GM12878 (cell line): ENCODE measurements at regions of chr6 and their contacts with region 1.

Region 1: GRCh38 chr6:15327271-15327670 is 81.4 kb downstream of the JARID2 start:
- DNase-seq: no peak
- ATAC-seq: peak; percentile 66
- H3K4me3 ChIP-seq: no peak overlapping the region; the same call in 1 of the 2 replicates
- H3K27ac ChIP-seq: peak overlapping the region; percentile 72
- H3K4me1 ChIP-seq: peaks cover 69% of the 10 kb centered on the region
- H3K27me3 ChIP-seq: no peaks in the 10 kb centered on the region
- CTCF ChIP-seq: peak; percentile 57 to 62 (median 60)
- EP300 ChIP-seq: no peak
- POLR2A ChIP-seq: no peak
- RAD21 ChIP-seq: peak; percentile 64

Region 2: GRCh38 chr6:15184441-15184861 is 142.8 kb before region 1 on chr6:
- CTCF ChIA-PET with region 1: no interaction called
- POLR2A ChIA-PET with region 1: no interaction called
- RAD21 ChIA-PET with region 1: no interaction called
- SMC1A ChIA-PET with region 1: no interaction called
- in situ Hi-C with region 1: no loop called
- intact Hi-C with region 1: no loop called
- DNase-seq: peak; percentile 15
- ATAC-seq: peak; percentile 96
- H3K4me3 ChIP-seq: no peak overlapping the region
- H3K27ac ChIP-seq: no peak overlapping the region
- H3K4me1 ChIP-seq: peaks cover 10% of the 10 kb centered on the region
- H3K27me3 ChIP-seq: no peaks in the 10 kb centered on the region
- CTCF ChIP-seq: no peak
- EP300 ChIP-seq: no peak
- POLR2A ChIP-seq: no peak
- RAD21 ChIP-seq: no peak

Region 3: DNA sequence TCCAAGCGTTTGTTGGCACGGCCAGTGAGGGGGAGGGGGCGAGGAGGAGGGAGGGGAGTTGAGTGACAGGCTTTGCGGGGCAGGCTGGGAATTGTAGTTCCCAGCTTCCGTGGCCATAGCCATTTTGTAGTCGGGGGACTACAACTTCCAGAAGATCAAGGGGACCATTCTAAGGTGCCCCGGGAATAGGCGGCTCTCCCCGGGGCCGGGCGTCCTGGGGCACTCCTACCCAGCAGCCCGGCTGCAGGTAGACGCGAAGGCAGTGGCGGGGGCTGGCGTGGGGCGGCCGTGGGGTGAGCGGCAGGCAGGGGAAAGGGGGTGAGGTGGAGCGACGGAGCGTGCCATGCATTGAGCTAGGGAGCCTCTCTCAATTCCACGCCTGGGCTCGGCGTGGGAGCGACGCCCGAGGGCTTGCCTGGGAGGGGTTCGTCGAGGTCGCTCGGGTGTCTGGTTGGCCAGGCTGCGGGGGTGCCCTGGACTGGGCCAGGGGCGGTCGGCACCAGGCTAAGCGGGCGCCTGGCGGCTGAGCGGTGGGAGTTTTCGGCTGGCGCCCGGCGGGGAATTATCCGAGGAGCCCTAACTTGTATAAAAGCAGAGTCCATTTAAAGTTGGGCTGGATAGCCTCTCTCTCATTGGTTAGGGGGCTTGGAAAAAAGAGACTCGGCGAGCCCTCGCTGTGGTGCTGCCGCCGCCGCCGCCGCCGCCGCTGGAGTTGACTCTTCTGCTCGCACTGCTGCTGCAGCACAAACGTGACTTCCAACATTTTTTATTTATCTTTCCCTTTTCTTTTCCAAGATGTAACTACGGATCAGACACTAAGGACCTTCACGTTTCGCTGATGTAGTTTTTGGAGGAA is 81.7 kb before region 1 on chr6 and contains the start of gene JARID2:
- CTCF ChIA-PET with region 1: interaction called, 9 read pairs
- POLR2A ChIA-PET with region 1: interaction called, 5 read pairs
- RAD21 ChIA-PET with region 1: interaction called, 11 read pairs
- SMC1A ChIA-PET with region 1: interaction called, 90 read pairs
- in situ Hi-C with region 1: no loop called
- intact Hi-C with region 1: no loop called
- DNase-seq: peak; percentile 91
- ATAC-seq: peak; percentile 72
- H3K4me3 ChIP-seq: peak within 1 kb of the TSS; percentile 97
- H3K27ac ChIP-seq: peak within 1 kb of the TSS; percentile 97
- H3K4me1 ChIP-seq: peaks cover under 1% of the 10 kb centered on the region; the same call in 1 of the 2 replicates
- H3K27me3 ChIP-seq: no peaks in the 10 kb centered on the region
- CTCF ChIP-seq: no peak
- EP300 ChIP-seq: 0 out of 4 replicates have a peak, but pooled peaks of 1 of the 2 experiments have one; percentile 14
- POLR2A ChIP-seq: peak; percentile 57; the same call in 1 of the 2 replicates
- RAD21 ChIP-seq: no peak
- polyA plus RNA-seq, gene JARID2: 4.2 to 5.2 TPM

Region 4: DNA sequence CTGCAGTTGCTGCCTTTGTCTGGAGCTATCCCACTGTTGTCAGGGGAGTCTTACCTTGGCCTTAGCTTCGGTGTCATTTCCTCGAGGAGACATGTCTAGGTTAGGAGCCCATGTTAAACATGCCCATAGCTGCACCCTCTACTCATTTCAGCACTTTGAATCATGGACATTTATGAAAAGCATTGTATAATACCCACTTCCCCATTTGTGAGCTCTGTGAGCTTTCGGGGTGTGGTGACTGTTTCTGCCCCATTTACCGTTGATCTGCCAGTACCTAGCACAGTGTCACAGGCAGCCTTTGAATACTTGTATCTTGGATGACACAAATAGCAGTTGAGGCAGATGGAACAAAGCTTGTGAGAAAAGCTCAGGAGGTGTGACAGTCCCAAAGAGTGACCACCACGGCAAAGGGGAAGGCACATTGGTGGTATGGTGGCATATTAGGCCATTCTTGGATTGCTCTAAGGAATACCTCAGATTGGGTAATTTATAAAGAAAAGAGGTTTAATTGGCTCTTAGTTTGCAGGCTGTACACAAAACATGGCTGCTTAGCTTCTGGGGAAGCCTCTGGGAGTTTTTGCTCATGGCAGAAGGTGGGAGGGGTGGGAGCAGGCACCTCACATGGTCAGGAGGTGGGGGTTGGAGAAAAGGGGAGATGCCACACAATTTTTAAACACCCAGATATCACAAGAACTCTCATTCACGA is 39.4 kb before region 1 on chr6:
- CTCF ChIA-PET with region 1: interaction called, 3 read pairs
- POLR2A ChIA-PET with region 1: interaction called, 3 read pairs
- RAD21 ChIA-PET with region 1: interaction called, 9 read pairs
- SMC1A ChIA-PET with region 1: interaction called, 10 read pairs
- in situ Hi-C with region 1: no loop called
- intact Hi-C with region 1: no loop called
- DNase-seq: peak; percentile 78
- ATAC-seq: peak; percentile 99
- H3K4me3 ChIP-seq: peak overlapping the region; percentile 11; the same call in 1 of the 2 replicates
- H3K27ac ChIP-seq: peak overlapping the region; percentile 79
- H3K4me1 ChIP-seq: peaks cover 24% of the 10 kb centered on the region
- H3K27me3 ChIP-seq: no peaks in the 10 kb centered on the region
- CTCF ChIP-seq: no peak
- EP300 ChIP-seq: peak in 1 of 2 experiments; percentile 78; a peak in 2 of 4 replicates
- POLR2A ChIP-seq: no peak
- RAD21 ChIP-seq: no peak

Region 5: GRCh38 chr6:15340775-15341174 is 13.5 kb after region 1 on chr6:
- CTCF ChIA-PET with region 1: interaction called, 7 read pairs
- POLR2A ChIA-PET with region 1: interaction called, 8 read pairs
- RAD21 ChIA-PET with region 1: interaction called, 8 read pairs
- SMC1A ChIA-PET with region 1: interaction called, 60 read pairs
- in situ Hi-C with region 1: no loop called
- intact Hi-C with region 1: no loop called
- DNase-seq: no peak
- ATAC-seq: peak; percentile 72
- H3K4me3 ChIP-seq: peak overlapping the region; percentile 6; the same call in 1 of the 2 replicates
- H3K27ac ChIP-seq: peak overlapping the region; percentile 80
- H3K4me1 ChIP-seq: peaks cover 50% of the 10 kb centered on the region
- H3K27me3 ChIP-seq: no peaks in the 10 kb centered on the region
- CTCF ChIP-seq: no peak
- EP300 ChIP-seq: no peak; a peak in 1 of 4 replicates
- POLR2A ChIP-seq: no peak
- RAD21 ChIP-seq: no peak

Region 6: GRCh38 chr6:15358579-15359327 is 31.5 kb after region 1 on chr6:
- CTCF ChIA-PET with region 1: interaction called, 21 read pairs
- POLR2A ChIA-PET with region 1: interaction called, 9 read pairs
- RAD21 ChIA-PET with region 1: interaction called, 24 read pairs
- SMC1A ChIA-PET with region 1: interaction called, 56 read pairs
- in situ Hi-C with region 1: no loop called
- intact Hi-C with region 1: loop called (anchors 2 kb)
- DNase-seq: peak; percentile 75
- ATAC-seq: peak; percentile 80
- H3K4me3 ChIP-seq: peak overlapping the region; percentile 27
- H3K27ac ChIP-seq: peak overlapping the region; percentile 81
- H3K4me1 ChIP-seq: peaks cover 75% of the 10 kb centered on the region
- H3K27me3 ChIP-seq: no peaks in the 10 kb centered on the region
- CTCF ChIP-seq: no peak
- EP300 ChIP-seq: no peak; a peak in 1 of 4 replicates
- POLR2A ChIP-seq: no peak
- RAD21 ChIP-seq: no peak

Region 7: GRCh38 chr6:15441215-15441868 is 114.1 kb after region 1 on chr6:
- CTCF ChIA-PET with region 1: interaction called, 24 read pairs
- POLR2A ChIA-PET with region 1: interaction called, 3 read pairs
- RAD21 ChIA-PET with region 1: interaction called, 11 read pairs
- SMC1A ChIA-PET with region 1: interaction called, 66 read pairs
- in situ Hi-C with region 1: no loop called
- intact Hi-C with region 1: loop called (anchors 5 kb)
- DNase-seq: no peak
- ATAC-seq: peak; percentile 74
- H3K4me3 ChIP-seq: no peak overlapping the region
- H3K27ac ChIP-seq: no peak overlapping the region
- H3K4me1 ChIP-seq: peaks cover 29% of the 10 kb centered on the region
- H3K27me3 ChIP-seq: no peaks in the 10 kb centered on the region
- CTCF ChIP-seq: peak; percentile 79 to 83 (median 79)
- EP300 ChIP-seq: no peak
- POLR2A ChIP-seq: no peak
- RAD21 ChIP-seq: peak; percentile 87